Ovary (tissue), 10 donors: ENCODE measurements at regions of chr11 and their contacts with region 1.

Region 1: GRCh38 chr11:560305-561147 is at the starts of genes LMNTD2 and RASSF7:
- DNase-seq: peak; percentile 89 to 93 (median 92)
- H3K4me3 ChIP-seq: peak within 1 kb of the TSS; percentile 56
- H3K27ac ChIP-seq: no peak within 1 kb of the TSS
- H3K4me1 ChIP-seq: peaks cover 7% of the 10 kb centered on the region
- H3K27me3 ChIP-seq: no peaks in the 10 kb centered on the region
- CTCF ChIP-seq: no peak
- EP300 ChIP-seq: no peak
- POLR2A ChIP-seq: no peak
- total RNA-seq, gene LMNTD2: 0.70 to 7.6 (median 1.2) TPM
- total RNA-seq, gene RASSF7: 4.7 to 163 (median 9.5) TPM

Region 2: DNA sequence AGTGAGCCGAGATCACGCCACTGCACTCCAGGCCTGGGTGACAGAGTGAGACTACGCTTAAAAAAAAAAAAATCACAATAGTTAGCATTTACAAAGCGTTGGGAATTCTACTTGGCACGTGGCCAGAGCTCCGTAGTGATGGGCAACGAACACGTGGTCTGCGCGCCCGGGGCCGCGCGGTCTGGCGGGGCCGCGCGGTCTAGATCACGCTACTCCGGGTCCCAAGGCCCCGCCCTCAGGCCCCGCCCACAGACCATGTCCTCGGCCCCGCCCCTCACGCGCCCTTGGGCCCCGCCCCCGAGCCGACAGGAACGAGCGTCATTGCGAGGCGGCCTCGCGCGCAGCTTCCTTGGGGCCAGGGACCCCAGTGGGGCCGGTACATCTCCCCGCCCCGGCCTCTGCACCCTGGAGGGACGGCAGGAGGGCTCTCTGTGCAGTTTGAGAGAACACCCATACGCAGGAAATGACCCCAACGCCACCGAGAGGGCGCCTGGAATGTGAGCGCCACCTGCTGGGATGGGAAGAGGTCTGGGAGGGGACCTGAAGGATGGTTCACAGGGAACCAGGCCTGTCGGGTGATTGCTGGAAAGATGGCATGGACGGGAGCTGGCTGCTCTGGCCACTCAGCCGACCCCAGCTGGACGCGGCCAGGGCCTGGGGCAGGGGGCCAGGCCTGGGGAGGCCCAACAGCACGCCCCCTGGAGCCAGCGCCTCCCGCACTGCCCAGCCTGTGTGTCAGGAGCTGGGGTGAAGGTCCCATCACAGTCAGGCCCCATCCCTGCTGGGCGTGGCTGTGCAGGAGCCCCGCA is 112.4 kb before region 1 on chr11:
- intact Hi-C with region 1: no loop called
- DNase-seq: peak; percentile 95 to 98 (median 98)
- H3K4me3 ChIP-seq: peak overlapping the region; percentile 71
- H3K27ac ChIP-seq: peak overlapping the region; percentile 73 to 84
- H3K4me1 ChIP-seq: peaks cover 2% of the 10 kb centered on the region
- H3K27me3 ChIP-seq: no peaks in the 10 kb centered on the region
- CTCF ChIP-seq: peak; percentile 72 to 94 (median 90)
- EP300 ChIP-seq: no peak
- POLR2A ChIP-seq: peak; percentile 90

Region 3: DNA sequence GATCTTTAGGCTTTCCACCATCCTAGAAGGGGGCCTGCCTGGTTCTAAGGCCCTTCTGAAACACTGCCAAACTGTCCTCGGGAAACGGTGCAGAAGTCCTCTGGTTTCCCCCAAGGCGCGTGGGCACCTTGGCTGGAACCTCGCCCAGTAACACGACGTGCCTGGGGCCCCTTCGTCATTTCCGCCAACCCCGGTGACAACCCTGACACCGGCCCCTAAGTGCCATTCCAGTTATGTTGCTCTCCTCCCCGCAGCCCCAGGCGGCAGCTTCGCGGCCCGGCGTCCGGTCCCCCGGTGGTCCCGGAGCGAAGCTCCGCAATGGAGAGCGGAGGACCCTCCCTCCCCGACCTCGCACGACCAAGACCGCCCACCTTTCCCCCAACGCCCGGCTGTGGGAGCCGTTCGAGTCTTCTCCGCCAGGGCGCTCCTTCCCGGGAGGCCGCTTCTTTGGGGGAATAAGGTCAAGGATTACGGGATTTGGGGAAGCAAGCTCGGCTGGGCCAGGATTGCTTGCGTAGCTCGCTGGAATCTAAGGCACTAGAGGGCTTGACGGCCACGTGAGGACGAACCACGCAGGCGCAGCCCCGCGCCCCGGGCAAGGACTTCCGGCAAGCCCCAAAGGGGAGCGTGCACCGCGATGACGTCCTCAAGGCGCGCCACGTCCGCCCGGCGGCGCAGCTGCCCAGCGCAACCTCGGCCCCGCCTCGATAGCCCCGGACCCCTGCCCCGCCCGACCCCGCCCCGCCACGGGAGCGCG is 54.1 kb before region 1 on chr11:
- intact Hi-C with region 1: no loop called
- DNase-seq: peak; percentile 98 to 99 (median 99)
- H3K4me3 ChIP-seq: peak overlapping the region; percentile 94
- H3K27ac ChIP-seq: peak overlapping the region; percentile 77 to 98
- H3K4me1 ChIP-seq: peaks cover 14% of the 10 kb centered on the region
- H3K27me3 ChIP-seq: no peaks in the 10 kb centered on the region
- CTCF ChIP-seq: peak in 2 of 3 donors; percentile 37 to 38
- EP300 ChIP-seq: peak; percentile 13
- POLR2A ChIP-seq: peak; percentile 68

Region 4: GRCh38 chr11:1825039-1825740 is 1264.7 kb after region 1 on chr11:
- intact Hi-C with region 1: loop called in 1 of 4 experiments (anchors 5 kb)
- DNase-seq: no peak
- H3K4me3 ChIP-seq: no peak overlapping the region
- H3K27ac ChIP-seq: no peak overlapping the region
- H3K4me1 ChIP-seq: no peaks in the 10 kb centered on the region
- H3K27me3 ChIP-seq: no peaks in the 10 kb centered on the region
- CTCF ChIP-seq: no peak
- EP300 ChIP-seq: no peak
- POLR2A ChIP-seq: no peak